AG04449 (cell line): ENCODE measurements at regions of chr1 and their contacts with region 1.

Region 1: DNA sequence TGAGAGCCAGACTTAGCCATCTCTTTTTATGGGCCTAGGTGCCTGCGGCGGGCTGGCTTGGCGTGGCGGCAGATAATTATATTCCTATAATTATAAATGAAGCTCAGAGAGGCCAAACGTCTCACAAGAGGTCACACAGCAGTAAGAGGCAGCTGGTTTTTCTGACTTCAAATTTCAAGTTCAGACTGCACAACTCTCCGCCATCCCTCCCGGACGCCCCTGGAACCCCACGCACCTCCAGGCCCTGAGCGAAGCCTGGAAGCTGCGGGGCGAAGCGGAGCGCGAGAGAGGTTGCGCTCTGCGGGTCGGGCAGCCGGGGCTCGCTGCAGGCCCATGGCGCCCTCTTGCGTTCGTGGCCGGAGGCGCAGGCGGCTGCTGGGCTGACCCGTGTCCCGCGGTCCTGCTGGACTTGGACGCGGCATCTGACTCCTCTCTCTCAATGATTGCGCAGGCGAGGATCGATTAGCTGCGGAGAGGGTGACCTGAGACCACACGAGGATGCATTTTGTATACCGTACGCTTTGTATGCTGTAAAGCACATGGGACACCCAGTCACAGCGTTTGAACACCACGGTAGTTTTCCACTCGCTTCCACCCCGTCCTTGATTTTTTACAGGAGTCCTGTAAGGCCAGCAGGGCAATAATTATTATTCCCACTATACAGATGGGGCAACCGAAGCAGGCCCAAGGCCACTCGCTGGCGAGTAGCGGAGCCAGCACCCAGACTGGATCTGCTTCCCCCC is 272.7 kb downstream of the FOXD2 start:
- DNase-seq: no peak
- H3K4me3 ChIP-seq: no peak overlapping the region
- CTCF ChIP-seq: peak; percentile 99

Region 2: GRCh38 chr1:47179017-47179987 is 531.2 kb before region 1 on chr1:
- CTCF ChIA-PET with region 1: interaction called, 19 read pairs
- POLR2A ChIA-PET with region 1: no interaction called
- DNase-seq: peak; percentile 72
- H3K4me3 ChIP-seq: peak overlapping the region; percentile 60
- CTCF ChIP-seq: peak; percentile 97

Region 3: GRCh38 chr1:47449822-47450552 is 260.5 kb before region 1 on chr1:
- CTCF ChIA-PET with region 1: interaction called, 10 read pairs
- POLR2A ChIA-PET with region 1: no interaction called
- DNase-seq: no peak
- H3K4me3 ChIP-seq: no peak overlapping the region
- CTCF ChIP-seq: peak; percentile 43

Region 4: DNA sequence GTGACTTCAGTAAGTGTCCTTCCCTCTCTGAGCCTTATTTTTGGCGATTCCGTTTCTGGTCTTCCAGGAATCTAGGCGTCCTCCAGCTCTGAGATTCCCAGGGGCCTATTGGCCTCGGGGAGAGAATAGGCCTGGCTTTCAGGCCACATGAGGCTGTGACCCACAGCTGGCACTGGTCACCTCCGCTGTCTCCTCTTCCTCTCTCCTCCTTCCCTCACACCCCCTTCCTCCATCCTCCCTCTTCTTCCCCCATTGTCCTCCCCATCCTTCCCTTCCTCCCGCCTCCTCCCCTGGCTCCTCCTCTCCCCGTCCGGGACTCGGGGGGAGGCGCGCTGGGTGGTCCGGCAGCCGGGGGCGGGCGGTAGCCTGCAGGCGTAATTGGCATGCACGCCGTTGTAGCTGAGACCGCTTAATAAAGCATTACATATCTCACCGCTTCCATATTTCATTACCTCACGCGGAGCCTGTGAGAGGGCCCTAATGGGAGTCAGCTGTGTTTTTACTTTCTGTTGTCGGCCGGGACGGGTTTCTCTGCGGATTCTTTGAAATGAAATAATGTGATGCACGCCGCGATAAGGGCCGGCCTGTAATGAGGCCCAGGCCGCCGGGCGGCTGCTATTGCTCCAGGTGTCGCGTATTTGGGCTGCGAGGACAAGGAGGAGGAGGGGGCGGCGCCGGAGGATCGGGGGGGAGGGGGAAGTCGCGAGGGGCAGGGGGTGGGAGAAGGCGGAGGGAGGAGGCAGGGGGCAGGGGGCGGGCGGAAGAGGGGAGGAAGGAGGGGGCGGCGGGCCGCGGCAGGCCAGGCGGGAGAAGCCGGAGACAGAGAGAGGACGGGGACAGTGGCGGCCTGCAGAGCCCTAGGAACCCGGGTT is 177.3 kb before region 1 on chr1:
- CTCF ChIA-PET with region 1: interaction called, 38 read pairs
- POLR2A ChIA-PET with region 1: no interaction called
- DNase-seq: peak; percentile 10
- H3K4me3 ChIP-seq: peak overlapping the region; percentile 46
- CTCF ChIP-seq: no peak

Region 5: GRCh38 chr1:47725992-47726855 is 15.7 kb after region 1 on chr1:
- CTCF ChIA-PET with region 1: interaction called, 58 read pairs
- POLR2A ChIA-PET with region 1: no interaction called
- DNase-seq: no peak
- H3K4me3 ChIP-seq: no peak overlapping the region
- CTCF ChIP-seq: peak; percentile 93